Caco-2 (cell line): ENCODE measurements at regions of chr19 and their contacts with region 1.

Region 1: GRCh38 chr19:16247353-16248182 is 49.9 kb downstream of the AP1M1 start:
- DNase-seq: peak; percentile 82 to 90
- H3K4me3 ChIP-seq: no peak overlapping the region
- H3K4me3 Mint-ChIP-seq: no peak overlapping the region
- H3K27ac Mint-ChIP-seq: no peak overlapping the region
- H3K4me1 ChIP-seq: no peaks in the 10 kb centered on the region
- H3K4me1 Mint-ChIP-seq: peaks cover 13% of the 10 kb centered on the region
- H3K27me3 ChIP-seq: no peaks in the 10 kb centered on the region
- H3K27me3 Mint-ChIP-seq: no peaks in the 10 kb centered on the region
- CTCF ChIP-seq: peak; percentile 88 to 94

Region 2: DNA sequence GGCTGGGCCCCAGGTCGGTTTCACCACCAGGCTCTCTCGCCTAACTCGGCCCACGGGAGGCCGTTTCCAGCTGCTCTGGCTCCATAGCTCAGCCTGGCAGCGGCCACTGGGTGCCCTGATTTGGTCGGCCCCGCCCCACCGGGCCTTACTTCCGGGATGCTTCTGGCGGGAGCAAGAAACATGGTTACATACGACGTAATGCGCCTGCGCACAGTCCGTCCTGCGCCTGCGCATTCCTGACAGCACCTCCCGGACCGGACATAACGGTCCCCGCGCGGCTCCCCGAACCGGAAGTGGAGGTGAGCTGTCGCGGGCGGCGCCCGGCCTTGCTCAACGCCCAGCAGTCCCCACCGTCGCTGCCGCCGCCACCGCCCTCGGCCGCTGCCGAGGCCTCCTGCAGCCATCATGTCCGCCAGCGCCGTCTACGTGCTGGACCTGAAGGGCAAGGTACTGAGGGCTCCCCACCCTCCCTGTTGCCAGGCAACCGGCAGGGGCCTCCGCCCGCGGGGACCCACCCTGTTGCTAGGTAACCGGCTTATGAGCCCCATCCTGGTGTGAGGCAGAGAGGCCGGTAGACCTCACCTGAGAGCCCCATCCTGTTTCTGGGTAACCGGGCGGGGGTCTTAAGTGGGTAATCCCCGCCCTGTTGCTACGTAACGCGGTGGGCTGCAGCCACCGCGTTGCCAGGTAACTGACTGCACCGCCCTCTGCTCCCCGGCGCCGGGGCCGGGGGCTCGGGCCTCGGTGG is 49.8 kb before region 1 on chr19 and contains the start of gene AP1M1:
- CTCF ChIA-PET with region 1: no interaction called
- POLR2A ChIA-PET with region 1: no interaction called
- intact Hi-C with region 1: no loop called
- DNase-seq: peak; percentile 98
- H3K4me3 ChIP-seq: peak within 1 kb of the TSS; percentile 70
- H3K4me3 Mint-ChIP-seq: peak within 1 kb of the TSS; percentile 81
- H3K27ac Mint-ChIP-seq: peak within 1 kb of the TSS; percentile 83
- H3K4me1 ChIP-seq: peaks cover 20% of the 10 kb centered on the region
- H3K4me1 Mint-ChIP-seq: peaks cover 7% of the 10 kb centered on the region
- H3K27me3 ChIP-seq: no peaks in the 10 kb centered on the region
- H3K27me3 Mint-ChIP-seq: no peaks in the 10 kb centered on the region
- CTCF ChIP-seq: no peak
- total RNA-seq, gene AP1M1: 98.0 and 105 TPM in 2 replicates

Region 3: DNA sequence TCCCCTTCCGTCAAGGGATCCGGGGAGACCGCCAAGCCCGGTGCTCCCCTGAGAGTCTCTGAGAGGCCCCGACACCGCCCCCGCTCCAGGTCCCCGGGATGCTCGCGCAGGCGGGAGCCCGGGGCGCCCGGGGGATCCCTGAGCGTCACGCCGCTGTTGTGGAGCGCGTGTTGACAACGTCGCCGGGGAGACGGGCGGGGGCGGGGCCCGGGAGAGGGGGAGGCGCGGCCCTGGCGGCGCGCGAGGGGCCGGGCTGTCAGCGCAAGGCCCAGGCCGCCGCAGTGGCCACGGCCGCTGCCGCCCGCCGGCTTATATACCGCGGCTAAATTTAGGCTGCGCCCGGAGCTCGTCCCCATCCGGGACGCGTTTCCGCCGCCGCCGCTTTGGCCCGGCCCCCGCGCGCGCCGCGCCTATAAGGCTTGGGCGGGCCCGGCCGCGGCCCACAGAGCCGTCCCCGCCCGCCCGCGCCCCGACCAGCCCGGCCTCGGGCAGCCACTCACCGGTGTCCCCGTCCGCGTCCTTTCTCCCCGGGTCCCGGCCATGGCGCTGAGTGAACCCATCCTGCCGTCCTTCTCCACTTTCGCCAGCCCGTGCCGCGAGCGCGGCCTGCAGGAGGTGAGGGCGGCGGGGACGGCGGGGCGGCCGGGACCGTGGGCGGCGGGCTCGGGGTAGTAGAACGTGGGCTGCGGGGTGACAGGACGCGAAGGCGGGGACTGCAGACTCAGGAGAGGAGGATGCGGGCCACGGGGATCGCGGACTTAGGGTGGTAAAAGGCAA is 77.0 kb after region 1 on chr19 and contains the start of gene KLF2:
- CTCF ChIA-PET with region 1: interaction called, 4 read pairs
- POLR2A ChIA-PET with region 1: no interaction called
- intact Hi-C with region 1: loop called (anchors 1 kb)
- DNase-seq: peak; percentile 71 to 84
- H3K4me3 ChIP-seq: peak within 1 kb of the TSS; percentile 61
- H3K4me3 Mint-ChIP-seq: peak within 1 kb of the TSS; percentile 66
- H3K27ac Mint-ChIP-seq: peak within 1 kb of the TSS; percentile 70
- H3K4me1 ChIP-seq: no peaks in the 10 kb centered on the region
- H3K4me1 Mint-ChIP-seq: no peaks in the 10 kb centered on the region
- H3K27me3 ChIP-seq: no peaks in the 10 kb centered on the region
- H3K27me3 Mint-ChIP-seq: no peaks in the 10 kb centered on the region
- CTCF ChIP-seq: no peak
- total RNA-seq, gene KLF2: 0.77 and 1.2 TPM in 2 replicates

Region 4: GRCh38 chr19:16382775-16383543 is 135.4 kb after region 1 on chr19:
- CTCF ChIA-PET with region 1: interaction called, 18 read pairs
- POLR2A ChIA-PET with region 1: no interaction called
- intact Hi-C with region 1: loop called (anchors 1 kb)
- DNase-seq: peak; percentile 74 to 75
- H3K4me3 ChIP-seq: no peak overlapping the region
- H3K4me3 Mint-ChIP-seq: no peak overlapping the region
- H3K27ac Mint-ChIP-seq: no peak overlapping the region
- H3K4me1 ChIP-seq: no peaks in the 10 kb centered on the region
- H3K4me1 Mint-ChIP-seq: no peaks in the 10 kb centered on the region
- H3K27me3 ChIP-seq: no peaks in the 10 kb centered on the region
- H3K27me3 Mint-ChIP-seq: no peaks in the 10 kb centered on the region
- CTCF ChIP-seq: peak; percentile 74